Endothelial cell of umbilical vein (primary cell): ENCODE measurements at regions of chr10 and their contacts with region 1.

Region 1: DNA sequence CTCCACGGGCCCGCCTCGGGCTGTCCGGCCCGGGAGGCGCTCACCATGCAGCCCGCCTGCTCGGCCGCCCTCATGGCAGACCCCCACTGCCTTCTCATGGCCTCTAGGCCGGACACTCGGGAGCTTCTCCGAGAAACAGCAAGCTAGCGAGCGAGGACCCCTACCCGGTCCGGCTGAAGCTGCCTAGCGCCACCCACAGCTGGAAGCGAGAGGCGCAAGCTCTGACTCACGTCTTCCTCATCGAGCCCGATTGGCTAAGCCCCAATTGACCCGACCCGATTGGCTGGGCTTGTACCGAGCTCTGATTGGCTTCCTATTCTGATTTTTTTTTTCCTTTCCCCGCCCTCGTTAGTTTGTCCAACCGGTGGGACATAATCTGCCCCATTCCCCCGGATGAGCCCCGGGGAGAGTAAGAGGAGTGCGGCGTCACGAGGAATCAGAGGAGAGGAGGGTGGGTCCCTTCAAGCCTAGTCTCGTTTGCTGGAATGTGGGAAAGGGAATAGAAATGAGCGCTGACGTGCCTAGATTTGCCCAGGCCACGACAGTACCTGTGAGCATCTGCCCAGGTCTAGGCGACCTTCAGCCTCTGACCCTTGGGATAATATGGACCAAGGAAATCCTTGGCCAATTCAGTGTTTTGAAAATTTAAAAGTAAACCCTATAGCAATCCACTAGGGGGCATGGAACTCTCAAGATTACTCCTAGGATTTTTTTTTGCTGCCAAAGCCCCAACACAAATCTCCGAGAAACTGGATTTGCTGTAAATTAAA is at the start of gene TYSND1:
- DNase-seq: peak; percentile 98
- H3K4me3 ChIP-seq: peak within 1 kb of the TSS; percentile 58 to 64 (median 64)
- H3K27ac ChIP-seq: peak within 1 kb of the TSS; percentile 45
- H3K4me1 ChIP-seq: peaks cover 11% of the 10 kb centered on the region
- H3K27me3 ChIP-seq: no peaks in the 10 kb centered on the region
- CTCF ChIP-seq: peak; percentile 66 to 87
- POLR2A ChIP-seq: peak; percentile 91
- total RNA-seq, gene TYSND1: 6.7 and 7.8 TPM in 2 replicates

Region 2: GRCh38 chr10:69786791-69787190 is 359.9 kb before region 1 on chr10:
- CTCF ChIA-PET with region 1: interaction called, 29 read pairs
- POLR2A ChIA-PET with region 1: no interaction called
- dilution Hi-C with region 1: no loop called
- intact Hi-C with region 1: no loop called
- DNase-seq: peak; percentile 66
- H3K4me3 ChIP-seq: no peak overlapping the region
- H3K27ac ChIP-seq: no peak overlapping the region
- H3K4me1 ChIP-seq: no peaks in the 10 kb centered on the region
- H3K27me3 ChIP-seq: peaks cover 24 to 25% of the 10 kb centered on the region in 2 experiments
- CTCF ChIP-seq: peak; percentile 49 to 50
- POLR2A ChIP-seq: no peak

Region 3: GRCh38 chr10:70115948-70116682 is 30.6 kb before region 1 on chr10:
- CTCF ChIA-PET with region 1: interaction called, 95 read pairs
- POLR2A ChIA-PET with region 1: no interaction called
- dilution Hi-C with region 1: no loop called
- intact Hi-C with region 1: loop called (anchors 1 kb)
- DNase-seq: peak; percentile 35
- H3K4me3 ChIP-seq: no peak overlapping the region
- H3K27ac ChIP-seq: no peak overlapping the region
- H3K4me1 ChIP-seq: peaks cover 6% of the 10 kb centered on the region
- H3K27me3 ChIP-seq: no peaks in the 10 kb centered on the region
- CTCF ChIP-seq: peak; percentile 85 to 95
- POLR2A ChIP-seq: no peak

Region 4: GRCh38 chr10:70158113-70158512 is 11.4 kb after region 1 on chr10:
- CTCF ChIA-PET with region 1: interaction called, 17 read pairs
- POLR2A ChIA-PET with region 1: interaction called, 11 read pairs
- dilution Hi-C with region 1: no loop called
- intact Hi-C with region 1: no loop called
- DNase-seq: no peak
- H3K4me3 ChIP-seq: no peak overlapping the region
- H3K27ac ChIP-seq: no peak overlapping the region
- H3K4me1 ChIP-seq: no peaks in the 10 kb centered on the region
- H3K27me3 ChIP-seq: no peaks in the 10 kb centered on the region
- CTCF ChIP-seq: no peak
- POLR2A ChIP-seq: no peak

Region 5: DNA sequence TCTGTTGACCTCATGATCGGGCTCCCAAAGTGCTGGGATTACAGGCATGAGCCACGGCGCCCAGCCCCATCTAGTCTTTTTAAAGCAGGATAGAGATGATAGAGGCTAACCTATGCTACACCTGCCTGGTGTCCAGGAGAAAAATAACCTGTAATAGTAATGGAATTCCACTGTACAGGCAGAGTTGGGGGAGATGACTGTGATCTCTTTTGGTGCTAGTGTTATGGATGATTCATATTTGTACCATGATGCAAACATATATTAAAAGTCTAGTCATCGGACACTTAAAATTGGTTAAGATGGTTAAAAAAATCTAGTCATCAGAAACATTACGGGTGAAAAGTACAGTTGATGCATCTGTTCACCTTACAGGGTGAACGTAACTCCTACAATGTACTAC is 29.8 kb after region 1 on chr10:
- CTCF ChIA-PET with region 1: interaction called, 8 read pairs
- POLR2A ChIA-PET with region 1: interaction called, 24 read pairs
- dilution Hi-C with region 1: no loop called
- intact Hi-C with region 1: no loop called
- DNase-seq: no peak
- H3K4me3 ChIP-seq: no peak overlapping the region
- H3K27ac ChIP-seq: no peak overlapping the region
- H3K4me1 ChIP-seq: peaks cover 11% of the 10 kb centered on the region
- H3K27me3 ChIP-seq: peaks cover 0 to 9% of the 10 kb centered on the region in 2 experiments
- CTCF ChIP-seq: no peak
- POLR2A ChIP-seq: no peak

Region 6: DNA sequence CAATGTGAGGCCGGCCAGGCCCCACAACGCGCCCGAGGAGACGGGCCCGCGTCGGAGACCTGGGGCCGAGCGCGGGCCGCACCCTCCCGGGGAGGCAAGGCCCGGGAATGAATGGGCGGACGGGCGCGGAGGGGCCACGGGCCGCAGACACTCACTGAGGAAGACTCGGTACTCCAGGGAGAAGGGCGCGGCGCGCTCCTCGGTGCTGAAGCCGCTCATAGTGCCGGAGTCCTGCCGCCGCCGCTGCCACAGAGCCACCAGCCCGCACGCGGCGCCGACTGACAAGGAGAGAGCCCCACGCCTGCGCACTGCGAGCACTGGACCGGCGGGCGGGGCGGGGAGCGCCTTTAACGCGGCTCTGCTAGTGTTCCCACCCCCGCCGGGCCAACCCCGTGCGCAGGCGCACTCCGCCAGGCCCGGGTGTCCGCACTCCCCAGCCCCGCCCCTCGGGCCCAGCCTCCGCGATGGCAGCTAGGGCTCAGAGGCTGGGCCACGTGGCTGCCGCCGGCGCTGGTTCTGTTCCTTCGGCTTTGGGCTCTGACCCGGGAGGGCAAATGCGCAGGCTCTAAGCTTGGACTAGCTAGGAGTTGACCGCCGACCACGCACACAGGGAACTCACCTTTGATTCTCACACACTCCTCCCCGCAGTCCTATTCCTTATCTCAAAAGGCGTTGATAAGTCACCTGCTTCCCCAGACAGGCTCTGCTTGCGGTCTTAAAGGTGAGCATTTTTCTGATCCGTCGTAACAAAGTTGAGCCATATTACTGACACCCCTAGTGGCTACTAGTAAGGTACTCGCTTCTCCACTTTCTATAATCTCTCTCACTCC is 86.7 kb after region 1 on chr10 and contains the start of gene PPA1:
- CTCF ChIA-PET with region 1: interaction called, 5 read pairs
- POLR2A ChIA-PET with region 1: no interaction called
- dilution Hi-C with region 1: no loop called
- intact Hi-C with region 1: loop called (anchors 5 kb)
- DNase-seq: peak; percentile 96
- H3K4me3 ChIP-seq: peak within 1 kb of the TSS; percentile 72 to 91 (median 80)
- H3K27ac ChIP-seq: peak within 1 kb of the TSS; percentile 58
- H3K4me1 ChIP-seq: peaks cover 11% of the 10 kb centered on the region
- H3K27me3 ChIP-seq: no peaks in the 10 kb centered on the region
- CTCF ChIP-seq: peak in 1 of 2 donors; percentile 9
- POLR2A ChIP-seq: peak; percentile 95
- total RNA-seq, gene PPA1: 115 and 140 TPM in 2 replicates